Ascending aorta (tissue), 2 donors: ENCODE measurements at regions of chr7 and their contacts with region 1.

Region 1: GRCh38 chr7:130440527-130441365 is at the start of gene CEP41:
- DNase-seq: peak; percentile 91 to 98
- H3K4me3 ChIP-seq: peak within 1 kb of the TSS; percentile 76 to 79
- H3K27ac ChIP-seq: peak within 1 kb of the TSS; percentile 77 to 78
- H3K4me1 ChIP-seq: peaks cover 0 to 3% of the 10 kb centered on the region in 2 donors
- H3K27me3 ChIP-seq: no peaks in the 10 kb centered on the region
- CTCF ChIP-seq: no peak
- total RNA-seq, gene CEP41: 4.3 TPM

Region 2: DNA sequence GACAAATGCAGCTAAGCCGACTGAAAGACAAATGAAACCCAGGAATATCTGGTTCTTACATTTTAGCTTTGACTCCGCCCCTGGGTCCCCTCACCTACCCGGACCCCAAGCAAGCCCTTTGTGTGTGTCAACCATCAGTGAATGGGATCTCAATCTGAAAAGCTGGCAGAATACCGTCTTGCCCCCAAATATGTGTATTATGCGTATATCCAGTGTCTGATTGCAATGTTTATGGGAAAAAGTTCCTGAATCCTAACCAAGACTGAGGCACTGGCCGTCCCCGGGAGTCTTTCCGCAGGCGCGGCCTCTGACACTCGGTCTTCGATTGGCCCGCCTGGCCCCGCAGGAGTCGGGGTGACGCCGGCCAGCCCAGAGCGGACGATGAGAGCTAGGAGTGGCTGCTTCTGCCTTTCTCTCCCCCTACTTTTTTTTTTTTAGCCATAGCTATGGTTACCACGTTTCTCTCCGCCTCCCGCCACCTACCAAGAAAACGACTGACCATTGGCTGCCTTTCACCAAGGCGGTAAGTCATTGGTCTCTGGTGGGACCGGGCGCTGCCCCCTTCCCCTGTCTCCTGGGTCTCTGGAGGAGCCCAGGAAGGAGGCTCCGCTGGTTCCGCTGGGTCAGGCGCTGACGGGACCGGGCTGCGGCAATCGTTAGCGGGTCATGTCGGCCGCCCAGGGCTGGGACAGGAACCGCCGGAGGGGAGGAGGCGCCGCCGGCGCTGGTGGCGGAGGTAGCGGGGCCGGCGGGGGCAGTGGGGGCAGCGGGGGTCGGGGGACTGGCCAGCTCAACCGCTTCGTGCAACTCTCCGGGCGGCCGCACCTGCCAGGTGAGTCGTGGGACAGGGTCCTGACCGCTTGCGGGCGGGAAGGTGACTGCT is 370.5 kb before region 1 on chr7 and contains the start of gene KLHDC10:
- intact Hi-C with region 1: loop called (anchors 5 kb)
- DNase-seq: peak; percentile 93 to 99
- H3K4me3 ChIP-seq: peak within 1 kb of the TSS; percentile 93 to 99
- H3K27ac ChIP-seq: peak within 1 kb of the TSS; percentile 75 to 85
- H3K4me1 ChIP-seq: peaks cover 0 to 19% of the 10 kb centered on the region in 2 donors
- H3K27me3 ChIP-seq: no peaks in the 10 kb centered on the region
- CTCF ChIP-seq: no peak
- total RNA-seq, gene KLHDC10: 13.0 TPM

Region 3: DNA sequence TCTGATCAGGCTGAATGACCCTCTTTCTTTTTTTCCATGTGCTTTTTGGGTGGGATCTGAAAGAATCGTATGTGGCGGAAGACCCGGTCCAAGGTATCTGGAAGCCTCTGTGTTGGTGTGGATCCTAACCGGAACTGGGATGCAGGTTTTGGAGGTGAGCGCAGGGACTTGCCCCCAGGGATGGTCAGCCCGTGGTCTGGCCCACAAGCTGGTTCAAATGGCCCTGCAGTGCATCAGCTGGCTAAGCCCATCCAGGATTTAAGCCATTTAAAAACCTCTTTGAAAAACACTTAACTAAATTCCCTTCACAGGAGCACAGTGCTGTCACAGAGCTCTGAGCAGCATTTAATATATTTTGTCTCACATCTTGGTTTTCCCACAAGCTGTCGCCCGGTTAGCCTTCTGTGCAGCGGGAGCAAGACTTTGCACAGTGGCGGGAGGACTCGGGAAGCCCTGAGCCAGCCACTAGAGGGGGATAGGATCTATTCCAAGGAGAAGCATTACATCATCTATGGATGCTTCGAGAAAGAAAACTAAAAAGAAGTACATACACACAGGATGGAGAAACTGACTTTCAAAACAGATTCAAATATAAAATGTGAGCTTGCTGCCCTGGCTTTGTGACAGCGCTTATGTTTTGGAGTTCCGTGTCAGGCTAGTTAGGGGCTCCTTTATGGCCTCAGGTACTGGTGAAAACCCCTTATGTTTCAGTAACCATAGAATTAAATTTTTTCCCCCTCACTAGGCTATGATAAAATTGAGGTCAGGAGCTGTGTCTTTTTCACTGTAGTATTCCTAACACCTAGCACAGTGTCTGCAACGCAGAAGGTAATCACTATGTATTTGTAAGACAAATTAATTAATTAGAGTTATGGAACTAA is 162.7 kb before region 1 on chr7:
- intact Hi-C with region 1: loop called (anchors 5 kb)
- DNase-seq: peak in 1 of 2 donors; percentile 78
- H3K4me3 ChIP-seq: no peak overlapping the region
- H3K27ac ChIP-seq: peak overlapping the region in 1 of 2 donors; percentile 11
- H3K4me1 ChIP-seq: peaks cover 4 to 5% of the 10 kb centered on the region in 2 donors
- H3K27me3 ChIP-seq: no peaks in the 10 kb centered on the region
- CTCF ChIP-seq: peak; percentile 45 to 73 (median 66)

Region 4: DNA sequence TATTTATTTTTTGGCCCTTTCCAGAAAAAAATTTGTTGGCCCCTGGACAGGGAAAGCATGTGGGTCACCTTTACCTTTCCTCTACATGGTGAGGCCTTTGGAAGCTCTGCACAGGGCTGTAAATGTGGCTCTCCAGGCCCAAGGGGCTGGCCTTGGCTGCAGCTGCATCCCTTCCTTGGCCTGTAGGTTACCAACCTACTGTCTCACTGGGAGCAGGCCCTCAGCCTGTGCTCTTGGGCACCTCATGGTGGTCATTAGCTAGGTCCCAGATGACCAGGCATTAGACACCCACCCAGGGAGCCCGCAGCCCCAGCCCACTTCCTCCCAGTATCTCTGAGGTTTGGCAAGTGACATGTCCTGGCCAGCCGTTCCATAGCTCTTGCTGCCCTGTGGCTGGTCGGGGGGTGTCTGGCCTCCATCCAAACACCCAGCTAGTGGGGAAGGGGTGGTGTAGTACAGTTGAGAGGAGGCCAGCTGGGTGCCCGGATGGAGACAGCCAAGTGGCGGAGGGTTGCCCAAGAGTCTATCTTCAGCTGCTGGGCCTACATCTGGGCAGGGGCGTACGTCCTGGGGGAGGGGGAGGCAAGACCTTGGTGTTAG is 103.2 kb before region 1 on chr7:
- intact Hi-C with region 1: no loop called
- DNase-seq: no peak
- H3K4me3 ChIP-seq: no peak overlapping the region
- H3K27ac ChIP-seq: no peak overlapping the region
- H3K4me1 ChIP-seq: no peaks in the 10 kb centered on the region
- H3K27me3 ChIP-seq: no peaks in the 10 kb centered on the region
- CTCF ChIP-seq: no peak

Region 5: DNA sequence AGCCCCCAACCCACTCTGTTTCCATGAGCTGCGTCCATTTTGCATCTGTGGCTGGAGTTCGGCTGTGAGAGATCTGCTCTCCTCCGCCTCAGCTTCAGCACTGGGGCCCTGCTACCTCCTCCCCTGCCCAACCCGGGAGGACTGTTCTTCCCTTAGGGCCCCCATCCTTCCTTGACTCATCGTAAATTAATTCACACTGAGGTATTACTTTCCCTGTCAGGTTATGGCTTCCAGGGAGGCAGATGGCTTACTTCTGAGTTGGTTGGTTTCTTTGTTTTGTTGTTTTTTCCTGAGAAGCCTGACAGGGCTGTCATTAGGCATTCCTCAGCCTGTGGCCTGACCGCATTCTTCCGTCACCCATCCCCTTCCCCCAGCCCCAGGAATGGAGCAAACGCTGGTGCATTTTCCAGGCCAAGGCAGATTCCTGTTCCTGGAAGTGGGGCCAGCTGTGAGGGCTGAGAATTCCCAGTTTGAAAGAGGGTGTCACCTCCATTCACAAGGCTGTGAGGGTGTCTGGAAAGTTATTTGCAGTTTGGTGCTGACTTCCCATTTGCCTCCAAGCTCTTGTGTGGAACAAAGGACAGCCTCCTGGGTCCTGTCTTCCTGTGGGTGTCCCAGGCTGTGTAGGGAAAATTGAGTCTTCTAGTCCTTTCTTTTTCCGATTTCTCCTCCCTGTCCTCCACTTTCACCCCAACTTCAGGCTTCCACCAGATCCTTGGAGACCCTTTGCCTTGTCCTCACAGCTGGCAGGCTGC is 84.4 kb before region 1 on chr7:
- intact Hi-C with region 1: loop called (anchors 5 kb)
- DNase-seq: peak in 1 of 2 donors; percentile 65
- H3K4me3 ChIP-seq: no peak overlapping the region
- H3K27ac ChIP-seq: peak overlapping the region; percentile 55 to 77
- H3K4me1 ChIP-seq: peaks cover 7 to 30% of the 10 kb centered on the region in 2 donors
- H3K27me3 ChIP-seq: no peaks in the 10 kb centered on the region
- CTCF ChIP-seq: no peak

Region 6: DNA sequence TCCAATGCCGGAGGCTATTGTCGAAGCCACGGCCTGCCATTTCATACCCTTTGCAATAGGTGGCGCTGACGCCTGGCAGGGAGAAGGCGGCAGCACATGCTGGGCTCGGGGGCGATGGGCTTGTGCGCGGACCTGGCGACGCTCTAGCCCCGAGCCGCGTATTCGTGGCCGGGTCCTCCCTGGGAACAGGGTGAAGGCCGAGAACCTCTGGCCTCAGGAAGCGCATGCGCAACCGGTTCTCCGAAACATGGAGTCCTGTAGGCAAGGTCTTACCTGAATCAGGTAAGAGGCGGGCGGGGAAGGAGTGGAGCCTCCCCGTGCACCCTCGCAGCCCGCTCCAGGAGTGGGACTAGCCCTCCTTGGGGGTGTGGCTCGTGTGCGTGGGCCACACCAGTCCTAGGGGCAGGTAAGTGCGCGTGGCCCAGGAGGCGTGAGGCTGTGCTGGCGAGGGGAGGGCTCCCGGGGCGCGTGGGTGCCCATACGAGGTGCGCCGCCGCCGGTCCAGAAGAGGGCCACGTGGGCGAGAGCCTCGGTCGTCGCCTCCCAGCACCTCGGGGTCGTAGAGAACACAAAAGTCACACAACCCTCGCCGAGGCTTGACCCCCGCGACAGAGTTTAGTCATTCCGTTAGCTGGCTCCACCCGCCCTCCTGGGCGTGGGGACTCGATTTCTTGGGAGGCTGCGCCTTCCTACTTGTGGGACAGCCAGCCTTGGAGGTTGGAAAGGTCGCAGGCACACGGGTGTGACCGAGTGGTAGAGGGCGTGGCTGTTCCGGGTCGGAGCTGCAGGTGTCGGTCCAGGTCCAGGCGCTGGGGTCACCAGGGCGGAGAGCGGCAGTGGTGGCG is 45.6 kb after region 1 on chr7:
- intact Hi-C with region 1: loop called (anchors 5 kb)
- DNase-seq: no peak
- H3K4me3 ChIP-seq: peak overlapping the region; percentile 58 to 71
- H3K27ac ChIP-seq: no peak overlapping the region
- H3K4me1 ChIP-seq: peaks cover 0 to 14% of the 10 kb centered on the region in 2 donors
- H3K27me3 ChIP-seq: no peaks in the 10 kb centered on the region
- CTCF ChIP-seq: peak; percentile 39 to 72 (median 53)